ENCODE measurements at regions of chr5 and their contacts with region 1.

Region 1: GRCh38 chr5:52893105-52893504 is 96.0 kb upstream of the ITGA2 start:
- DNase-seq: no peak
- H3K4me3 ChIP-seq: no peak overlapping the region
- CTCF ChIP-seq: no peak
- POLR2A ChIP-seq: no peak

Region 2: DNA sequence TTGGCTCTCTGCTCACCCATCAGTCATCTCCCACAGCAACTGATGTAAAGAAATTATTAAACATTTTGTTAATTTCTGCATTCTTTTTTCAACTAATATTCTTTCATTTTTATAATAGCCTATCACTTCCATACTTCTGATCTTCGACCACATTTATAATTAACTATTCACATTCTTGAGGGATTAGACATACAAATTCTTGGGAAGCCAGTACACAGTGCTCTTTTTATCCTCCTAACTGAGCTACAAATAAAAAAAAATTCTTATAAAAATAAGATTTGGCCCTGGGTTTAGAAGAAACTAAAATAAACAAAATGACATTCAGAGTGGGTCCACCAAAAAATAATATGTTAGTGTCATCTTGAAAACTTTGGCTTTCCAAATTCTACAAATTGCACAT is 209.0 kb before region 1 on chr5:
- intact Hi-C with region 1: loop called (anchors 10 kb)
- DNase-seq: no peak
- H3K4me3 ChIP-seq: no peak overlapping the region
- CTCF ChIP-seq: no peak
- POLR2A ChIP-seq: no peak

Region 3: GRCh38 chr5:52870448-52870847 is 22.7 kb before region 1 on chr5:
- intact Hi-C with region 1: no loop called
- DNase-seq: no peak
- H3K4me3 ChIP-seq: no peak overlapping the region
- CTCF ChIP-seq: no peak
- POLR2A ChIP-seq: no peak

Measured in lower leg skin (tissue), 4 donors.